Heart right ventricle (tissue), 16 donors: ENCODE measurements at regions of chr1 and their contacts with region 1.

Region 1: GRCh38 chr1:3226701-3227350 is 157.8 kb downstream of the PRDM16 start:
- DNase-seq: no peak
- ATAC-seq: no peak
- H3K4me3 ChIP-seq: no peak overlapping the region
- H3K27ac ChIP-seq: no peak overlapping the region
- H3K4me1 ChIP-seq: peaks cover 0 to 17% (median 9%) of the 10 kb centered on the region in 9 donors
- H3K27me3 ChIP-seq: peaks cover 0 to 16% (median 4%) of the 10 kb centered on the region in 7 donors
- CTCF ChIP-seq: no peak

Region 2: DNA sequence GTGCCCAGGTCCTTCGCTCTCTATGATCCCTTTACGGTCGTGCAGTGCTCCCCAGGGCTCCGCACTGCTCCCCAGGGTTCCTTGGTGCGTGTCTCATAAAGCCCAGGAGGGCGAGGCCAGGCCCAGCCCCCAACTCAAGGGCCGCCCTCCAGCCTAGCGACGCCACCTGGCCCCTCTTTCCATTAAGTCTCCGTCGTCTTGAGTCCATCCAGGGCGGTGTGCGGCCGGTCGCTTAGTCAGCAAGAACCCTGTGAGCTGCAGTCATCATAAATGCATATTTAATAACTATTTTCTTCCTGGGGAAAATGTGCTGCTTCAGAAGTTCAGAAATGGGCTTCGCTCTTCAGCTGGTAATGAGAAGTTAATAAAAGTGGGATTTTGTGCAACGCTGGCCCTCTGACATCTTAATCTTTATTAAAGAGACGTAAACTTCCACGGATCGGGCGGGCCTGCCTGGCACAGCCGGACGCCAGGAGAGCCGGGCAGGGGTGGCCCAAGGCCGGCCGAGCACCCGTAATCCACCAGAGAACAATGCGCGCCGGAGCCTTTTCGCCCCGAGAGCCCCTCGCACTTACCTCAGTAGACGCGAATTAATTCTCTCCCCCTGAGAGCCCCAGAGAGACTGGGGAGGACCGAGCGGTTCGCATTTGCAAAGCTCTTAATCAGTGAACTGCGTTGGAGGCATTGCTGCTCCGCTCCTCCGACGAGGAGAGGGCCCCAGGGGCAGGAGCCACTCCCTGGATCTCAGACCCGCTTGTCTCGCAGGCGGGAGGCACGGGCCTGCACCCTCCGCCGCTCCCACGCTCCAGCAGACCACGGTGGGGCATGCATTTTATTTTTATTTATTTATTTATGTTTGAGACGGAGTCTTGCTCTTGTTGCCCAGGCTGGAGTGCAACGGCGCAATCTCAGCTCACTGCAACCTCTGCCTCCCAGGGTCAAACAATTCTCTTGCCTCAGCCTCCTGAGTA is 39.3 kb after region 1 on chr1:
- intact Hi-C with region 1: loop called in 1 of 10 experiments (anchors 5 kb)
- DNase-seq: no peak
- ATAC-seq: no peak
- H3K4me3 ChIP-seq: no peak overlapping the region
- H3K27ac ChIP-seq: no peak overlapping the region
- H3K4me1 ChIP-seq: peaks cover 0 to 29% (median 5%) of the 10 kb centered on the region in 9 donors
- H3K27me3 ChIP-seq: peaks cover 0 to 17% (median 0%) of the 10 kb centered on the region in 7 donors
- CTCF ChIP-seq: no peak